HCT116 (cell line): ENCODE measurements at regions of chrX and their contacts with region 1.

Region 1: DNA sequence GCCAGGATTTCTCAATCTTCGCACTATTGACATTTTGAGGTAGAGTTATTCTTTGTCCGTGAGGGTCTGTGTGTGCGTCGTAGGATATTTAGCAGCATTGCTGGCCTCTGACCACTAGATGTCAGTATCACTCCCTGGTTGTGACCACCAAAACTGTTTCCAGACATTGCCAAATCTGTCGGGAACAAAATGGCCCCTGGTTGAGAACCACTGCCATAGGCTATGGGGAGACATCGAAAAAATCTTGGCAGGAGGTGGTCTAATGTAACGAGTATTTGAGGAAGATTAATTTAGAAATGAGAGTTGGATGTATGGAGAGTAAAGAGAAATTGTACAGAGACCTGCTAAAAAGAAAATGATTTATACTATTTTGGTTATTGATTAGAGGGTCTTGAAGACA is 108.4 kb downstream of the DOCK11 start:
- DNase-seq: peak; percentile 46
- ATAC-seq: peak; percentile 82
- H3K4me3 ChIP-seq: no peak overlapping the region
- H3K27ac ChIP-seq: no peak overlapping the region
- H3K4me1 ChIP-seq: no peaks in the 10 kb centered on the region
- H3K27me3 ChIP-seq: no peaks in the 10 kb centered on the region
- CTCF ChIP-seq: peak; percentile 47 to 70 (median 70); a peak in 5 of 6 replicates
- POLR2A ChIP-seq: no peak
- RAD21 ChIP-seq: peak; percentile 72

Region 2: GRCh38 chrX:118459494-118459893 is 144.5 kb before region 1 on chrX:
- CTCF ChIA-PET with region 1: interaction called, 71 read pairs
- POLR2A ChIA-PET with region 1: no interaction called
- RAD21 ChIA-PET with region 1: interaction called, 3 to 9 read pairs
- intact Hi-C with region 1: loop called (anchors 2 kb)
- DNase-seq: no peak
- ATAC-seq: peak; percentile 67
- H3K4me3 ChIP-seq: no peak overlapping the region
- H3K27ac ChIP-seq: no peak overlapping the region
- H3K4me1 ChIP-seq: no peaks in the 10 kb centered on the region
- H3K27me3 ChIP-seq: no peaks in the 10 kb centered on the region
- CTCF ChIP-seq: peak; percentile 27 to 47 (median 45); a peak in 5 of 6 replicates
- POLR2A ChIP-seq: no peak
- RAD21 ChIP-seq: peak; percentile 71